ENCODE measurements at regions of chr9 and their contacts with region 1.

Region 1: DNA sequence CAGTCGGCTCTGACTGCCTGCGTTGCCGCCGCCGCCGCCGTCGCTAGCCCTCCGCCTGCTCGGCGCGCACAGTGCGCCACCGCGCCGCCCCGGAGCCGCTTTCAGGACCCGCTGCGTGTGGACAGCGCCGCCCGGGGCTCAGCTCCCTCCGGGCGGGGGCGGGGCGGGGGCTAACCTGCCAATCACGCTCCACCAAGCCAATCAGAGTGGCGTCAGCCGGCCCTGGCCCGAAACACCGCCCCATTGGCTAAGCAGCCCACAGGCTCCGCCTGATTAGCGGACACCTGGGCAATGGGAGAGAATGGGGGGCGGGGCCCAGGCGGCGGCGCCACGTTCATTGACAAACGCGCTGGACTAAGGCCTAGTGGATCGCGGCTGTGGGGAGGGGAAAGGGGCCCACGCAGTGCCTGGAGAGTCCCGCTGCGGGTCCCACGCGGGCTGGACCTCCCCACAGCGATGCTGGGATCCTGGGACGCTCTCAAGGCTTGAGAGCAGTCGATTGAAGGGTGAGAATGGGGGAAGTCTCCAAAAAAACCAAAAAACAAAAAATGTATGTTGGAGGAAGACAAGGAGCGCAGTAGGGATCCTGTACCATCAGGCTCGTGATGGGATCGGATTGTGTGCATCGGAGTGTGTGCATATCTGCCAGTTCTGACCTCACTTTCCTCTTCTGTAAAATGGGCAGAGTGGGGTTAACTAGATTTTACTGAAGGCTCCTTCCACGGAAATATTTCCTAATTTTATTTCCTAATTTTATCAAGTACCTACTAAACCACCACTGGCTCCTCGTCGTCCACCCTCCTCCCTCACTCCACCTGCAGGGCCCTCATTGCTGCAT is 6.3 kb downstream of the PAX5 start:
- DNase-seq: peak; percentile 99
- H3K4me3 ChIP-seq: peak overlapping the region; percentile 88
- H3K27ac ChIP-seq: peak overlapping the region; percentile 95
- H3K4me1 ChIP-seq: peaks cover 78% of the 10 kb centered on the region
- CTCF ChIP-seq: peak; percentile 34; the same call in 1 of the 2 replicates

Region 2: GRCh38 chr9:36074870-36075532 is 952.8 kb before region 1 on chr9:
- CTCF ChIA-PET with region 1: no interaction called
- POLR2A ChIA-PET with region 1: no interaction called
- intact Hi-C with region 1: no loop called
- DNase-seq: no peak
- H3K4me3 ChIP-seq: no peak overlapping the region
- H3K27ac ChIP-seq: no peak overlapping the region
- H3K4me1 ChIP-seq: no peaks in the 10 kb centered on the region
- CTCF ChIP-seq: no peak

Region 3: DNA sequence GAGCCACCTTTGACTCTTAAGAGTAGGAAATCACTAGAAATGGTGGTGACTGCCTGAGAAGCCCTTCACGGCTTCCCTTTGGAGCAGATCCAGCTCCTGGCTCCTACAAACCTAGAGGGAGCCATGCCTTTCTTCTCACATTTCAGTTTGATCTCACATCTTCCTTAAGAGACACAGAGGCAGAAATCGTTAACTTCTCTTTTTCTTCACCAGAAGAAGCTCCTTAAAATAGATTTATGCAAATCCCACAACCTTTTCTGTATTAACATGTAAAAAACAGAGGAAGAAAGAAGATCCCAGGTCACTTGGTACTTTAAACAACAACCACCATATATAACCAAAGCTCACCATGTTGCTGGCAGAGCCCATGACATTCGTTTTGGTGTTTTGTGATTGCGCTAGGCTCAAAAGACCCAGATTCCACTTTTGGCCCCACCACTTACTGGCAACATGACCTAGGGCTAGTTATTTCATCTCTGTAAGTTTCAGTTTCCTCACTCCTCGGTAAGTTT is 23.3 kb before region 1 on chr9:
- CTCF ChIA-PET with region 1: interaction called, 3 read pairs
- POLR2A ChIA-PET with region 1: interaction called, 36 read pairs
- intact Hi-C with region 1: loop called (anchors 1 kb)
- DNase-seq: peak; percentile 87
- H3K4me3 ChIP-seq: peak overlapping the region; percentile 56
- H3K27ac ChIP-seq: peak overlapping the region; percentile 96
- H3K4me1 ChIP-seq: peaks cover 100% of the 10 kb centered on the region
- CTCF ChIP-seq: peak; percentile 48; the same call in 1 of the 2 replicates

Region 4: DNA sequence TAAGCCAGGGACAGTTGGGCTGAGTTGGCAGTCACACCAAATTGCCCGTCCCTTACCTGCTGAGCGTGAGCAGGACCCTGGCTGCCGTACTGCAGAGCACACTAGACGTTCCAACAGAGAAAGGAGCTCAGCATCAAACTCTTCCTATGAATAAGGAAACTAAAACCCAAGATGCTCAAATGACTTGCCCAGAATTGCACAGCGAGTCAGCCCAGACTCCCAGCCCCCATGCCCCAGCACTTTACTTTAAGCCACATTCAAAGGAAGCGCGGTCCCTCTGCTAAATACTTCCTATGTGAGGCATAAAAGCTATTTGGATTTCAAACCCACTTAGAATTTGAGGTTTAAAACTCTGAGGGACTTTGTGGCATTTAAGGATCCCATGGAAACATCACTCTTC is 17.6 kb before region 1 on chr9:
- CTCF ChIA-PET with region 1: interaction called, 3 read pairs
- POLR2A ChIA-PET with region 1: interaction called, 36 read pairs
- intact Hi-C with region 1: no loop called
- DNase-seq: no peak
- H3K4me3 ChIP-seq: peak overlapping the region; percentile 38
- H3K27ac ChIP-seq: peak overlapping the region; percentile 72
- H3K4me1 ChIP-seq: peaks cover 82% of the 10 kb centered on the region
- CTCF ChIP-seq: no peak

Measured in OCI-LY7 (cell line).